ENCODE measurements at regions of chr15 and their contacts with region 1.

Region 1: GRCh38 chr15:63233667-63234423 is 43.6 kb upstream of the APH1B start:
- DNase-seq: no peak
- ATAC-seq: no peak
- H3K4me3 ChIP-seq: no peak overlapping the region
- H3K4me3 Mint-ChIP-seq: no peak overlapping the region
- H3K27ac ChIP-seq: peak overlapping the region; percentile 79
- H3K27ac Mint-ChIP-seq: peak overlapping the region; percentile 42 to 61
- H3K4me1 ChIP-seq: peaks cover 26 to 32% of the 10 kb centered on the region in 2 experiments
- H3K4me1 Mint-ChIP-seq: peaks cover 81 to 88% (median 82%) of the 10 kb centered on the region in 3 donors
- H3K27me3 ChIP-seq: no peaks in the 10 kb centered on the region
- H3K27me3 Mint-ChIP-seq: no peaks in the 10 kb centered on the region

Region 2: DNA sequence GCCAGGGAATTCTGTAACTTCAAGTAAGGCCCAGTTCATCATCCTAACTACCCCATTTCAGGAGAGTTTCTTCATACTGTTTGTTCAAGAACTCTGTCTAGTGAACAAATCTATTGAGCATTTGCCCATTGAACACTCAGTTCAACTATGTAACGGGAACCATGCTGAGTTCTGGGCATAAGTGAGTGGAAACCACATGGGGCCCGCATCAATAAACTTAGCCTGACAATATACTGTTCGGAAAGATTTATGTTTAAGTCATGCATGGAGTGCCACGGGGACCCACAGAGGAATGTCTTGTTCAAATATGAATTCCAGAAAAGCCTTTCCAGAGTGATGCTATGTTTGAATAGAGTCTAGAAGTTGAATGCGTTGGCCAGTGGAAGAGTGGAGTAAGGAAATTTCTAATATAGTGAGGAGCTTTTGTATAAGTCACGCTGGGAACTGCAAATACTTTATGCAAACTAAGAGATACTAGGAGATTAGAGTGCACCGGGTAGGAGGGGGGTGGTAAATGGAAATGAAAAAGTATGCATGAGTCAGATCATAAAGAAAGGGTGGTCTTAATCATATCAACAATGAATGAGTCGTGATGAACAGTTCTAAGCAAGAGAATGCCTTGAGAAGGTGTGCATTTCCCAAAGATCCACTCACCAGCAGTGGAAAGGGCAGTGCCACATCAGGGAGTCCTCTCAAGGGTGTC is 1453.4 kb before region 1 on chr15:
- CTCF ChIA-PET with region 1: no interaction called
- POLR2A ChIA-PET with region 1: no interaction called
- DNase-seq: no peak
- ATAC-seq: no peak
- H3K4me3 ChIP-seq: no peak overlapping the region
- H3K4me3 Mint-ChIP-seq: no peak overlapping the region
- H3K27ac ChIP-seq: no peak overlapping the region
- H3K27ac Mint-ChIP-seq: no peak overlapping the region
- H3K4me1 ChIP-seq: no peaks in the 10 kb centered on the region
- H3K4me1 Mint-ChIP-seq: no peaks in the 10 kb centered on the region
- H3K27me3 ChIP-seq: peaks cover 0 to 8% of the 10 kb centered on the region in 2 experiments
- H3K27me3 Mint-ChIP-seq: peaks cover 22 to 35% of the 10 kb centered on the region in 2 donors

Region 3: GRCh38 chr15:62472616-62473299 is 761.1 kb before region 1 on chr15:
- CTCF ChIA-PET with region 1: no interaction called
- POLR2A ChIA-PET with region 1: no interaction called
- DNase-seq: no peak
- ATAC-seq: no peak
- H3K4me3 ChIP-seq: no peak overlapping the region
- H3K4me3 Mint-ChIP-seq: no peak overlapping the region
- H3K27ac ChIP-seq: no peak overlapping the region
- H3K27ac Mint-ChIP-seq: no peak overlapping the region
- H3K4me1 ChIP-seq: no peaks in the 10 kb centered on the region
- H3K4me1 Mint-ChIP-seq: no peaks in the 10 kb centered on the region
- H3K27me3 ChIP-seq: no peaks in the 10 kb centered on the region
- H3K27me3 Mint-ChIP-seq: peaks cover 0 to 2% of the 10 kb centered on the region in 2 donors

Region 4: DNA sequence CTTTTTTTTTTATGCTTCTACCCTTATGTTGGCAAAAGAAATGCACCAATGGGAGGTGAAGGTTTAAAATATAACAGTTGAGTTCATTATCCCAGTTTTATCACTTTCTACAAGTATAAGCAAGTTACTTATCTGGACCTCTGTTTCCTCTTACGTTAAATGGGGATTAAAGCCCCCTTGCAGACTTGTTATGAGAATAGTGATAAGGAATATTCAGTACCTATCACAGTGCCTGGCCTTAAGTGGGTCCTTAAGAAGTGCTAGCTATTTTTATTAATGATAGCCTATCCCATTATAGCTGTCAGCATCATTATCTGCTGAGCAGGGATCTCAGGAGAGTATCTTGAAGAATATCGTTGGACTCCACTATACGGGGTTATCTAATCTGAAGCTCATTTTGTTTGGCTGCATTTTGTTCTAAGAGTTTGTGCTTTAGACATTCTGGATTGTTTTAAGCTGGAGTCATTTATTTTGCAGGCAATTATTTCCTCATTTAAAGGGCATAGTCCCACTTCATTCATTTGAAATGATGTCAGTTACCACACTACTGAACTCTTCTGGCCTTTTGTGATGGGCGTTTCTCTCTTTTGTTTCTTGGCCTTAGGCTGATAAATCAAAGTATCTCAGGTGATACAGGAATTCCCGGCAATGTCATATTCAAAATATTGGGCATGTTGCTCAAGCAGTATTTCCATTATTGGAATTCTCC is 15.6 kb before region 1 on chr15:
- CTCF ChIA-PET with region 1: interaction called in 1 of 2 experiments, 3 read pairs
- POLR2A ChIA-PET with region 1: interaction called, 4 to 10 read pairs
- DNase-seq: no peak
- ATAC-seq: no peak
- H3K4me3 ChIP-seq: no peak overlapping the region
- H3K4me3 Mint-ChIP-seq: no peak overlapping the region
- H3K27ac ChIP-seq: no peak overlapping the region
- H3K27ac Mint-ChIP-seq: peak overlapping the region; percentile 13 to 66
- H3K4me1 ChIP-seq: peaks cover 3 to 20% of the 10 kb centered on the region in 2 experiments
- H3K4me1 Mint-ChIP-seq: peaks cover 71 to 72% (median 72%) of the 10 kb centered on the region in 3 donors
- H3K27me3 ChIP-seq: no peaks in the 10 kb centered on the region
- H3K27me3 Mint-ChIP-seq: no peaks in the 10 kb centered on the region

Region 5: DNA sequence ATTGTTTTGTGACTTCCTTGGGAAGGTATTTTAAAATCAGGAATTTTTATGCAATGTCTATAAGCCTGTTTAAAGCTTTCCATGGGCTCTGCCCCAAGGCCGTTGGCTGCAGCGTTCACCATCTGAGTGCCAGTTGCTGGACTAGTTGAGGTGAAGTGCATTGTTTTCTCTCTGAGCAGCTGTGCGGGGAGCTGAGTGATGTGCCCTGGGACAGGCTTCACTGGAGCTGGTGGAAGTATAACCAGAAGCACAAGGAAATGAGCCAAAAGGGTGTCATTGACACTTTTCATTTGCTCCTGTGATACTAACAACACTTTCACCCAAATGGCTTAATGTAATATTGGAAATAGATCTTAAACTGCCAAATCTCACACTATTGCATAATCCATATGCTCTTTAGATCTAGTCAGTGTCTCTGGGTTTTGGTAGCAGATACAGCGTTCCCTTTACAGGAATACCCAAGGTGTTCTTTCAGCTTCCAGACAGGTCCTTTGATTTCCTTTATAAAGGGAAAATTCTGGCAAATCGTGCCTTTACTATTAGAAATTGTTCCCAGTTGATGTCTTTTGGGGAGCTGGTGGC is 72.7 kb after region 1 on chr15:
- CTCF ChIA-PET with region 1: no interaction called
- POLR2A ChIA-PET with region 1: no interaction called
- DNase-seq: no peak
- ATAC-seq: no peak
- H3K4me3 ChIP-seq: no peak overlapping the region
- H3K4me3 Mint-ChIP-seq: no peak overlapping the region
- H3K27ac ChIP-seq: no peak overlapping the region
- H3K27ac Mint-ChIP-seq: no peak overlapping the region
- H3K4me1 ChIP-seq: no peaks in the 10 kb centered on the region
- H3K4me1 Mint-ChIP-seq: no peaks in the 10 kb centered on the region
- H3K27me3 ChIP-seq: no peaks in the 10 kb centered on the region
- H3K27me3 Mint-ChIP-seq: no peaks in the 10 kb centered on the region

Region 6: GRCh38 chr15:63791228-63791627 is 557.4 kb after region 1 on chr15:
- CTCF ChIA-PET with region 1: no interaction called
- POLR2A ChIA-PET with region 1: no interaction called
- DNase-seq: no peak
- ATAC-seq: no peak
- H3K4me3 ChIP-seq: no peak overlapping the region
- H3K4me3 Mint-ChIP-seq: no peak overlapping the region
- H3K27ac ChIP-seq: no peak overlapping the region
- H3K27ac Mint-ChIP-seq: peak overlapping the region in 1 of 2 donors; percentile 4
- H3K4me1 ChIP-seq: peaks cover 2 to 5% of the 10 kb centered on the region in 2 experiments
- H3K4me1 Mint-ChIP-seq: peaks cover 40 to 49% (median 45%) of the 10 kb centered on the region in 3 donors
- H3K27me3 ChIP-seq: no peaks in the 10 kb centered on the region
- H3K27me3 Mint-ChIP-seq: no peaks in the 10 kb centered on the region

Region 7: GRCh38 chr15:63870403-63871209 is 636.8 kb after region 1 on chr15:
- CTCF ChIA-PET with region 1: no interaction called
- POLR2A ChIA-PET with region 1: interaction called in 1 of 2 experiments, 12 read pairs
- DNase-seq: no peak
- ATAC-seq: no peak
- H3K4me3 ChIP-seq: no peak overlapping the region
- H3K4me3 Mint-ChIP-seq: no peak overlapping the region
- H3K27ac ChIP-seq: no peak overlapping the region
- H3K27ac Mint-ChIP-seq: no peak overlapping the region
- H3K4me1 ChIP-seq: peaks cover 3 to 4% of the 10 kb centered on the region in 2 experiments
- H3K4me1 Mint-ChIP-seq: peaks cover 12 to 18% (median 15%) of the 10 kb centered on the region in 3 donors
- H3K27me3 ChIP-seq: no peaks in the 10 kb centered on the region
- H3K27me3 Mint-ChIP-seq: no peaks in the 10 kb centered on the region

Measured in T-cell (primary cell).